Endothelial cell of umbilical vein (primary cell): ENCODE measurements at regions of chr7 and their contacts with region 1.

Region 1: DNA sequence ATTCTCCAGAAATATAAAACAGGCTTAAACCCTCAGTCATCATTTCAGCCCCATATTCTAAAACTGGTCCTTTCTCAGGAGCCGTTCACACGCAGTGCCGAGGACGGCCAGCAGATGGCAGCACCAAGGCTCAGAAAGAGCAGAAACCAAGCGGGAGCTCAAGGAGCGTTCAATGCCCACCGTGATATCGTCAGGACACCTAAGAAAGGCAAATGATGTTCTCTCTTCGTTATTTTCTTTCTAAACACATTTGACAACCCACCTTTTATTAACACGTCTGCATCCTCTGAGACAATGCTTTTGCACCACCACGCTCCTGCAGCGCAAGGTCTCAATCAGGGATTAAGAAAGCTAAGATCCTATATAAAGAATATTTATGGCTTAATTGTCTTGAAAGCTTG is 45.7 kb upstream of the RBM33 start:
- DNase-seq: peak; percentile 73
- H3K4me3 ChIP-seq: no peak overlapping the region
- H3K27ac ChIP-seq: no peak overlapping the region
- H3K4me1 ChIP-seq: no peaks in the 10 kb centered on the region
- H3K27me3 ChIP-seq: peaks cover 3 to 14% of the 10 kb centered on the region in 2 experiments
- CTCF ChIP-seq: peak; percentile 93 to 98
- POLR2A ChIP-seq: no peak

Region 2: DNA sequence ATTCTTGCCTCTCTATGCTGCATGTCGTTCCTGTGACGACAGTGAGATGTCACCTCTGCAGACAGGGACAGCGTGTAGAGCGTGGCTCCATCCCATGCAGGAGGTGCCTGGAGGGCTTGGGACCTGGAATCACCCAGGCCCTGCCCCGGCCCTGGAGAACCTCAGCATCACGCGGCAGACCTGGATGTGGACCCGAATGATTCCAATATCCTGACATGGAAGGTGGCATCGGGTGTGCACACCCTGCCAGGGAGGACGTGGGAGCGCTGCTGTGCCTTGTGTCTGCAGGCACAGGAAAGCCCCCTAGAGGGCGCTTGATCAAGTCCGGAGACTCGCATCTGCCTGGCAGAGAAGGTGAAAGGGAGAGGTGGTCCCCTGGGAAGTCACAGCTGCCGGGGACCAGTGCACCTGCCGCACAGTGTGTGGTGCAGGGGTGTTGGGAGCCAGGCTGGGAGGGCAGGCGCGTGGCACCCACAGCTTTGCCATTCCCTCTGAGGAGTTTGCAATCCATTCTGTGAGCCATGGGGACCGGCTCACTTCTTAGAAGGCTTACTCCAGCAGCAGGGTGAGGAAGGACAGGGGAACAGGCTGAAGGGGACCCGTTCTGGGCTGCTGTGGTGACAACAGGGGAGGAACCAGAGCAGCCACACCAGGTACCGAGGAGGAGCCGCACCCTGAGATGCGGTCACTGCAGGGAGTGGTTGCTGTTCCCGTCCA is 186.1 kb before region 1 on chr7:
- CTCF ChIA-PET with region 1: no interaction called
- POLR2A ChIA-PET with region 1: no interaction called
- dilution Hi-C with region 1: no loop called
- intact Hi-C with region 1: no loop called
- DNase-seq: peak; percentile 23
- H3K4me3 ChIP-seq: no peak overlapping the region
- H3K27ac ChIP-seq: no peak overlapping the region
- H3K4me1 ChIP-seq: no peaks in the 10 kb centered on the region
- H3K27me3 ChIP-seq: no peaks in the 10 kb centered on the region
- CTCF ChIP-seq: peak; percentile 50 to 72
- POLR2A ChIP-seq: no peak

Region 3: DNA sequence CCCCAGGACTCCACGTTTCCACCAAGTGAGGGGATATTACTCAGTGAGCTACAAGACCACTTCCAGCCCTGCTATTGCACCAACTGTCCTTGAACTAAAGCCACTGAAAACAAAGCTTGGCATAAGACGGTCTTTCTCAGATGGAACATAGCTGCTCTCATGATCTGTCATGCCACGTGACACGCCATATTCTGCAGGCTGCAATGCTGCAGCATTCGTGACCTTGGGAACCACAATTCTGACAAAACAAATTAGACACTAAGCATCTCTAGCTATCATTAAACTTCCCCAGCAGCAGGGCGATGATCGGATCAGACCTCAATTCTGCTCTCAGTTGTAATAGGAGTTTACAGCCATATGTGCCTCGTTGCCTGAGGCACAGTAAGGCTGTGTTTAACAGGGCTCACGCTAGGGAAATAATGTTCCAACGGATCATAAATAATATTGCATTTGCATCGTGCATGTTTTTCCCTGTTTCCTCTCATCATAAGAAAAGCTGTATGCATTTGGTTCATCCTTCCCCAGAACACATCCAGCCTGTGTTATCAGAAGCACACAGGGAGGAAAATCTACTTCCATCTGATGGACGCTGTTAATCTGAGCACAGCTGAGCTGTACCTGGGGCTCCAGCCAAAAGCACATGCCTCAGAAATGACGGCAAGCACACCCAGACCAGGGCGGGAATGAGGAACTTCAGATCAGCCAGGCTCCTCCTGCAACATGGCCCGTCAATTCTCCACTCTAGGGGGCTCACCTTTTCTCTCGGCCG is 13.9 kb before region 1 on chr7:
- CTCF ChIA-PET with region 1: interaction called, 19 read pairs
- POLR2A ChIA-PET with region 1: no interaction called
- dilution Hi-C with region 1: no loop called
- intact Hi-C with region 1: no loop called
- DNase-seq: no peak
- H3K4me3 ChIP-seq: no peak overlapping the region
- H3K27ac ChIP-seq: no peak overlapping the region
- H3K4me1 ChIP-seq: no peaks in the 10 kb centered on the region
- H3K27me3 ChIP-seq: no peaks in the 10 kb centered on the region
- CTCF ChIP-seq: no peak
- POLR2A ChIP-seq: no peak

Region 4: GRCh38 chr7:155644178-155644970 is 45.6 kb after region 1 on chr7 and contains the start of gene RBM33:
- CTCF ChIA-PET with region 1: interaction called, 17 read pairs
- POLR2A ChIA-PET with region 1: interaction called, 3 read pairs
- dilution Hi-C with region 1: no loop called
- intact Hi-C with region 1: loop called (anchors 2 kb)
- DNase-seq: peak; percentile 87
- H3K4me3 ChIP-seq: peak within 1 kb of the TSS; percentile 83 to 100 (median 98)
- H3K27ac ChIP-seq: peak within 1 kb of the TSS; percentile 92
- H3K4me1 ChIP-seq: peaks cover 21% of the 10 kb centered on the region
- H3K27me3 ChIP-seq: no peaks in the 10 kb centered on the region
- CTCF ChIP-seq: no peak
- POLR2A ChIP-seq: peak; percentile 91
- total RNA-seq, gene RBM33: 62.9 and 68.2 TPM in 2 replicates

Region 5: DNA sequence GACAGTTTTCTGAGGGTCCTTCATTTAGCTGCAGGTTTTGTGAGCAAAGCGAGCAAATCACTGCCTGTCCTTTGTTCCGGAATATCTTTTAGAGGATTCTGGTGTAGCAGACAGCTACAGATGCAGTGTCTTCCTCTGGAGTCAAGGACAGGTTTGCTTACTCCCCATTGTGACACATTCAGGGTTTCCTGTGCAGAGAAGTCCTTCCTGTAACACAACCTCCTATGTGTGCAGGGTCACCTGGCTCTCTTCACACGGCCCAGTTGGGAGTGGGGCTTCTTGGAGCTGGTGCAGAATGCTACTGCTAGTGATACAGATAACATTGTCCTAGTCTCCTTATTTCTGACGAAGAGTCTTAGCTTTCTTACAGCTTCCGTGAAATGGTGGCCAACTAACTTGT is 93.5 kb after region 1 on chr7:
- CTCF ChIA-PET with region 1: interaction called, 16 read pairs
- POLR2A ChIA-PET with region 1: no interaction called
- dilution Hi-C with region 1: no loop called
- intact Hi-C with region 1: no loop called
- DNase-seq: peak; percentile 39
- H3K4me3 ChIP-seq: no peak overlapping the region
- H3K27ac ChIP-seq: no peak overlapping the region
- H3K4me1 ChIP-seq: peaks cover 10% of the 10 kb centered on the region
- H3K27me3 ChIP-seq: no peaks in the 10 kb centered on the region
- CTCF ChIP-seq: no peak
- POLR2A ChIP-seq: no peak

Region 6: DNA sequence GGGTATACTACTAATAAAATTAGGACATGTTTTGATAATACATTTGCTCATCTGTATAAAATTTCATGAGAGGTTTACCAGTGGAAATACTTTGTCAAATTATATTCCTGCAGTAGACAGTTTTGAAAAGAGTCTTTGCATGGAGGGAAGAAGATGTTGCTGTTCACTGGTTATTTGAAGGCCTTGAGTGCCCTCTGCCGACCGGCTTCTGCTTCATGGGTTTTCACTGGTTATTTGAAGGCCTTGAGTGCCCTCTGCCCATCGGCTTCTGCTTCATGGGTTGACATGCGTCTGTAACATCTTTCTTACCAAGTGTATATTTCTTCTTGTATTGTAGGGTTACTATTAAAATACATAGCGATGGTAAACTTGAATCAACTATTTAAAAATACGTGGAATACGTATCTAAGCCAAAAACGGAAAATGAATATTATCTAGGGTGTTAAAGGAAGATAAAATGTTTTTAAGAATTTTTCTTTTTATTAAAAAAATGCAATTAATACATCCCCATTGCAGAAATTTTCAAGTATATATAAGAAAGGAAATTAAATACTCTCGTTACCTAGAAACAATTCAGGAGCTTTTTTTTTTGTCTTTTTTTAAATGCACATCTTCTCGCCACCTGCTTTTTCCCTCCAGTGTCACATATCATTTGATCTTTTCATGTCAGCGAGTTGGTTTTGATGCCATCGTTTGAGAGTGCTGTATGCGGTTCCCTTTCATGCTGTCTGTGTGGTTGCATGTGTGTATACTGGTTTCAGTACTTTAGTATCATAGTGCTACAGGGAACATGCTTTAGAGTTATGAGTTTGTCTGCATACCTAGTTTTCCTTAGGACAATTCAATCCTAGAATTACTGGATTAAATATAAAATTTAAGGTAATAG is 140.1 kb after region 1 on chr7:
- CTCF ChIA-PET with region 1: interaction called, 189 read pairs
- POLR2A ChIA-PET with region 1: interaction called, 4 read pairs
- dilution Hi-C with region 1: no loop called
- intact Hi-C with region 1: loop called (anchors 1 kb)
- DNase-seq: peak; percentile 75
- H3K4me3 ChIP-seq: no peak overlapping the region
- H3K27ac ChIP-seq: no peak overlapping the region
- H3K4me1 ChIP-seq: no peaks in the 10 kb centered on the region
- H3K27me3 ChIP-seq: no peaks in the 10 kb centered on the region
- CTCF ChIP-seq: peak; percentile 41 to 58
- POLR2A ChIP-seq: no peak

Region 7: DNA sequence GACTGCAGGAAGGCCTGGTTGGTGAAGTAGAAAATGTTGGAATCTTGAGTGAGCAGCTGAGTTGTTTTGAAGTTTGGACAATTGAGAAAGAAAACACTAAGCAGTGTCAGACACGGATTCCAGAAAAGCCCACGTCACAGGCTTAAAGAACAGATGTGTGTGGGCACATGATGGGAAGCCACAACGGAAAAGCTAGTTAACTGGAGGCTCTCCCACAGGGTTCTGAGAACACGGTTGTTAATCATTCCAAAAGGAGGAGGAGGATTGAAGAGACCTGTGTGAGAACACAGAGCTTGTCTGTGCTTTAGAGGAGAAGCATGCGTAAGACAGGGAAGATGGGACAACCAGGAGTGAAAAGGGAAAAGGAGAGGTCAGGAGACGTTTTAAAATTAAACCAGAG is 170.9 kb after region 1 on chr7:
- CTCF ChIA-PET with region 1: interaction called, 323 read pairs
- POLR2A ChIA-PET with region 1: no interaction called
- dilution Hi-C with region 1: no loop called
- intact Hi-C with region 1: loop called (anchors 1 kb)
- DNase-seq: no peak
- H3K4me3 ChIP-seq: no peak overlapping the region
- H3K27ac ChIP-seq: no peak overlapping the region
- H3K4me1 ChIP-seq: peaks cover under 1% of the 10 kb centered on the region
- H3K27me3 ChIP-seq: no peaks in the 10 kb centered on the region
- CTCF ChIP-seq: no peak
- POLR2A ChIP-seq: no peak

Region 8: GRCh38 chr7:155907450-155908200 is 308.8 kb after region 1 on chr7:
- CTCF ChIA-PET with region 1: no interaction called
- POLR2A ChIA-PET with region 1: no interaction called
- dilution Hi-C with region 1: no loop called
- intact Hi-C with region 1: no loop called
- DNase-seq: no peak
- H3K4me3 ChIP-seq: no peak overlapping the region
- H3K27ac ChIP-seq: no peak overlapping the region
- H3K4me1 ChIP-seq: no peaks in the 10 kb centered on the region
- H3K27me3 ChIP-seq: no peaks in the 10 kb centered on the region
- CTCF ChIP-seq: no peak
- POLR2A ChIP-seq: no peak